CD4-positive, alpha-beta memory T cell (primary cell): ENCODE measurements at regions of chr5 and their contacts with region 1.

Region 1: GRCh38 chr5:172179361-172179989 is 8.5 kb downstream of the STK10 start:
- DNase-seq: peak in 4 of 5 donors; percentile 37 to 80 (median 44)
- H3K4me3 ChIP-seq: peak overlapping the region; percentile 44 to 55
- H3K4me3 Mint-ChIP-seq: peak overlapping the region; percentile 85 to 99 (median 94)
- H3K27ac ChIP-seq: peak overlapping the region; percentile 96
- H3K27ac Mint-ChIP-seq: peak overlapping the region; percentile 97 to 100 (median 99)
- H3K4me1 ChIP-seq: peaks cover 90% of the 10 kb centered on the region
- H3K4me1 Mint-ChIP-seq: peaks cover 51 to 97% (median 75%) of the 10 kb centered on the region in 4 donors
- H3K27me3 ChIP-seq: no peaks in the 10 kb centered on the region
- H3K27me3 Mint-ChIP-seq: no peaks in the 10 kb centered on the region

Region 2: DNA sequence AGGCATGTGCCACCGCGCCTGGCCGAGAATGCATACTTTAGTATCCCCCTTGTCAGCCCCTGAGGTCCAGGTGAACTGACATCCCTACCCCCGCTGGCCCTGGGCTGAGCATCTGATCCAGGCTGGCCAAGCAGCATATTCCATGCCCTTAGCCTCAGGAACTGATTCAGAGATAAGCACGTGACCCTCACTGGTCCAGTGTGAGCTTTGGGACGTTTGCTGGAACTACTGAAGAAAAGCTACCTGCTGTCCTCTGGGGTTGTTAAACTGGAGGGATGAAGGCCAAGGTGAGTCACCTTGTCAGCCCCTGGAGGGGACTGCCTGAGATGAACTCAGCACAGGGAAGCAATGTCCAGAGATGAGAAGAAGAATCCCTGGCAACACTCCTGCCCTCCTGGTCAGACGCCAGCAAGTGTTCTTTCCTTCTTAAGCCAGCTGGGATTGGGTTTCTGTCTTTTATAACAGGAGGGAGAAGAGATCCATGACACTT is 113.9 kb before region 1 on chr5:
- CTCF ChIA-PET with region 1: interaction called, 4 read pairs
- POLR2A ChIA-PET with region 1: interaction called, 52 read pairs
- intact Hi-C with region 1: no loop called
- DNase-seq: no peak
- H3K4me3 ChIP-seq: no peak overlapping the region
- H3K4me3 Mint-ChIP-seq: peak overlapping the region in 5 of 8 donors; percentile 4 to 86 (median 80)
- H3K27ac ChIP-seq: peak overlapping the region; percentile 62
- H3K27ac Mint-ChIP-seq: peak overlapping the region in 5 of 7 donors; percentile 29 to 98 (median 95)
- H3K4me1 ChIP-seq: peaks cover 68% of the 10 kb centered on the region
- H3K4me1 Mint-ChIP-seq: peaks cover 46 to 79% (median 60%) of the 10 kb centered on the region in 4 donors
- H3K27me3 ChIP-seq: no peaks in the 10 kb centered on the region
- H3K27me3 Mint-ChIP-seq: no peaks in the 10 kb centered on the region

Region 3: DNA sequence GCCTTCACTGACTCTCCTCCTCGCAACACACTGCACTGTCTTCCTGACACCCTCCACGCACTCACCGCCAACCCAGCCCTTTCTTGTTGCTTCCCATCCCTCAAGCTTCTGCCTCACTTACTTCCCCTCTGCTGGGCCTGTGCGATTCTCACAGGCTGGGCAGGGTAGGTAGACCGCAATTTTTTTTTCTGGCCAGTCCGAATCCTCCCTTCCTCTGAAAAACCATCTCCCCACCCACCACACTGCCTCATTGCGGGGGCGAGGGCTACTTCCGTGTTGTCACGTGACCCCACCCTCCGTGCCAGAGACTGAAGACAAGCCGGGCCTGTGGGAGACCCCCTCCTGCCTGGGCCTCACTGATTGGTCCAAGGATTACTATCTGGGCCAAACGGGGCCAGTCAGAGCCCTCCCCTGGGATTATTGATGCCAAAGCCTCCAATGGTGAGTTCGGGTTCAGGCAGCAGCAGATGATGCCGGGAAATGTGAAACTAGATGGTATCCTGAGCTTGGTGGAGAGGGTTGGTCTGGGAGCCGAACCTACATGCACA is 64.5 kb before region 1 on chr5:
- CTCF ChIA-PET with region 1: interaction called, 248 read pairs
- POLR2A ChIA-PET with region 1: interaction called, 597 read pairs
- intact Hi-C with region 1: loop called (anchors 1 kb)
- DNase-seq: peak; percentile 56 to 83 (median 59)
- H3K4me3 ChIP-seq: peak overlapping the region in 1 of 2 donors; percentile 17
- H3K4me3 Mint-ChIP-seq: peak overlapping the region; percentile 69 to 92 (median 80)
- H3K27ac ChIP-seq: peak overlapping the region; percentile 74
- H3K27ac Mint-ChIP-seq: peak overlapping the region; percentile 94 to 100 (median 96)
- H3K4me1 ChIP-seq: peaks cover 93% of the 10 kb centered on the region
- H3K4me1 Mint-ChIP-seq: peaks cover 56 to 86% (median 72%) of the 10 kb centered on the region in 4 donors
- H3K27me3 ChIP-seq: no peaks in the 10 kb centered on the region
- H3K27me3 Mint-ChIP-seq: no peaks in the 10 kb centered on the region

Region 4: GRCh38 chr5:172142709-172143215 is 36.7 kb before region 1 on chr5:
- CTCF ChIA-PET with region 1: interaction called, 4 read pairs
- POLR2A ChIA-PET with region 1: interaction called, 11 read pairs
- intact Hi-C with region 1: no loop called
- DNase-seq: no peak
- H3K4me3 ChIP-seq: no peak overlapping the region
- H3K4me3 Mint-ChIP-seq: peak overlapping the region in 4 of 8 donors; percentile 15 to 61 (median 34)
- H3K27ac ChIP-seq: no peak overlapping the region
- H3K27ac Mint-ChIP-seq: peak overlapping the region; percentile 58 to 94 (median 72)
- H3K4me1 ChIP-seq: peaks cover 86% of the 10 kb centered on the region
- H3K4me1 Mint-ChIP-seq: peaks cover 66 to 87% (median 78%) of the 10 kb centered on the region in 4 donors
- H3K27me3 ChIP-seq: no peaks in the 10 kb centered on the region
- H3K27me3 Mint-ChIP-seq: no peaks in the 10 kb centered on the region

Region 5: DNA sequence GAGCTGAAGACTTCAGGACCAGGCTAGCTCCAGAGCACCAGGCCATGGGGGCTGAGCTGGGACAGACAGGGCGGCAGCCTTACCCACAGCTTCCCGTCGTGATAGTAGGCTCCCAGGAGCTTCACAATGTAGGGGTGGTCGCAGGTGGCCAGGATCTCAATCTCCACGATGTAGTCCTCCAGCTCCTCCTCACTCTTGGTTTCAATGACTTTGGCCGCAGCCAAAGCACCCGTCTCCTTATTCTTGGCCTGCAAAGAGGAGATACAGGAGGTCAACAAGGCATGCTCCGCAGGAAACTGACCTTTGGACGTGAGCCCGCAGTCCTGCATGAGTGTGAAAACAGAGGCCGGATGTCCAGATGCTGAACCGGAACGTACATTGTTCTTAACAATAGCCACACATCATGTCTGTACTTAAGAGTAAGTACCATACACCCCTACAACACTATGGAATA is 22.9 kb before region 1 on chr5:
- CTCF ChIA-PET with region 1: interaction called, 429 read pairs
- POLR2A ChIA-PET with region 1: interaction called, 89 read pairs
- intact Hi-C with region 1: loop called (anchors 1 kb)
- DNase-seq: no peak
- H3K4me3 ChIP-seq: no peak overlapping the region
- H3K4me3 Mint-ChIP-seq: peak overlapping the region in 2 of 8 donors; percentile 3 to 9
- H3K27ac ChIP-seq: no peak overlapping the region
- H3K27ac Mint-ChIP-seq: peak overlapping the region in 6 of 7 donors; percentile 35 to 88 (median 74)
- H3K4me1 ChIP-seq: peaks cover 75% of the 10 kb centered on the region
- H3K4me1 Mint-ChIP-seq: peaks cover 53 to 90% (median 69%) of the 10 kb centered on the region in 4 donors
- H3K27me3 ChIP-seq: no peaks in the 10 kb centered on the region
- H3K27me3 Mint-ChIP-seq: no peaks in the 10 kb centered on the region

Region 6: DNA sequence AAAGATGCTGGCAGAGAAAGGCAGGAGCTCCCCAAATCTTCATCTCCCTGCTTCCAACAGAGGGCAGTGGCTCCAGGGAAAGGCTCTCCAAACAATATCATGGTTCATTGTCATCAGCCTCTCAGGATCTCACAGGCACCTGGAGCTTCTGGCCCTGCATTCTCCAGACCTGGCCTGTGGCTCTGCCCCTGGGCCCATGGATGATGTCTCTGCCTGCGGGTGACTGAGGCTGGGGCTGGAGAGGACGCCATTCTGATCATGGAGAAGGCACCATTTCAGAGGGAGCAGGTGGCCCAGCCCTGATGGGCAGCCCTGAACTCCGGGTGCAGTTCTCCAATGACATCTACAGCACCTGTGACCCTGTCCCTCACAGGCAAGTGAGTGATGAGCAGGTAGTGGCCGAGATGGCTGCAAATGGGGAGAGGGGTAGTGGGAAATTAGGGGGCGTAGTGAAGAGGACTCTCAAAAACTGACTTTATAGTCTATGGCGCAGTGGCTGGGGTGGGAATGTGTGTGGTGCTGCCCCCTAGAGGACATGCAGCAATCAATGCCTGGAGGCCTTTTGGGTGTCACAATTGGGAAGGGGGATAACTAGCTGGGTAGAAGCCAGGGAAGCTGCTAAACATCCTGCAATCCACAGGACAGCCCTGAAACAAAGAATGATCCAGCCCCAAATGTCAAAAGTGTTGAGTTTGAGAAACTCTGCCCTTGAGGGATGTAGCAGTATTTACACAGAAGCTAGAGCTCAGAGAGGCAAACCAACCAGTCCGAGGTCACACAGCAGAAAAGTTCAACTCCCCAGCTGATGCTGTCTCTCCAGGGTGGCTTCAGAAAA is 271.6 kb after region 1 on chr5:
- CTCF ChIA-PET with region 1: no interaction called
- POLR2A ChIA-PET with region 1: no interaction called
- intact Hi-C with region 1: no loop called
- DNase-seq: peak in 4 of 5 donors; percentile 18 to 28 (median 22)
- H3K4me3 ChIP-seq: no peak overlapping the region
- H3K4me3 Mint-ChIP-seq: peak overlapping the region in 3 of 8 donors; percentile 13 to 59 (median 47)
- H3K27ac ChIP-seq: no peak overlapping the region
- H3K27ac Mint-ChIP-seq: no peak overlapping the region
- H3K4me1 ChIP-seq: peaks cover 11% of the 10 kb centered on the region
- H3K4me1 Mint-ChIP-seq: peaks cover 2 to 20% (median 12%) of the 10 kb centered on the region in 4 donors
- H3K27me3 ChIP-seq: peaks cover 5% of the 10 kb centered on the region
- H3K27me3 Mint-ChIP-seq: peaks cover 26 to 43% of the 10 kb centered on the region in 2 donors

Region 7: DNA sequence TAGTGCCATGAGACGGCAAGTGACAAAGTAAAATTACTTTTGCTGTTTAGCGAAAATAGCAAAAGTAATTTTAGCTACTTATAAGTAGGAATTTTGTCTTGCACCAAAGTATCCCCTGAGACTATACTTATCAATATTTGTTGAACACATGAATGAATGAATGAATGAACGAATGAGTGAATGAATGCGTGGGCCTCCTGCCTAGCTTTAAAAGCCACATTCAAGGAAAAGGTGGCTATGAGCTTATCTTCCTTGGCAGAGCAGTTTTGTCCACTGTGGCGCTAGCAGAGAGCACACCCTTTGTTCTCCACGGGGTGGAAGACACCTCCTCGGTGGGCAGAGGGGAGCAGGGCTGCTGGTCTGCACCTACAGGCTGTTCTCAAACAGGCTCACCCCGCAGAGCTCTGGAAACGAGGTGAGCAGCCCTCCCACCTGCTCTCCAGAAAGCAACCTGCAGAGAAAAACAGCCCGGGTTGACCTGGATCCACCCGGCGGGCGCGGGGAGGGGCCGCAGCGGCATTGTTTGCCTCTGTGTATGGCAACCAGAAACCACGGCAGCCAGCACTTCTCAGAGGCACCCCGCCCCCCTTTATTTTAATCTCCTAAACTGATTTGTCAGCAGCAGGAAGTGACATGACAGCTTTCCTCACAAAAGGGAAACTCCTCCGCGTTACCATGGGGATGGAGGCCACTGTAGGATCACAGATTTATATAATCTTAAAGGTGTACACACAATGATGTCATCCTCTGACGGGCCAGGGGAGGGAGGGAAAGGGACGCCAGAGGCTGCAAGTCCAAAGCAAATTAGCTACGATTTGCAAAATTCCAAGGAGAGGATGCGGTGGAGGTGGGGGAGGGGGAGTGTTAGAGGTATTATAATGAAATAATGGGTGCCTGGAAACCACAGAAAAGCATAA is 585.6 kb after region 1 on chr5:
- CTCF ChIA-PET with region 1: no interaction called
- POLR2A ChIA-PET with region 1: interaction called, 19 read pairs
- intact Hi-C with region 1: loop called (anchors 1 kb)
- DNase-seq: peak; percentile 98 to 100 (median 99)
- H3K4me3 ChIP-seq: peak overlapping the region in 1 of 2 donors; percentile 52
- H3K4me3 Mint-ChIP-seq: peak overlapping the region; percentile 77 to 90 (median 84)
- H3K27ac ChIP-seq: peak overlapping the region; percentile 100
- H3K27ac Mint-ChIP-seq: peak overlapping the region; percentile 95 to 100 (median 99)
- H3K4me1 ChIP-seq: peaks cover 55% of the 10 kb centered on the region
- H3K4me1 Mint-ChIP-seq: peaks cover 46 to 70% (median 58%) of the 10 kb centered on the region in 4 donors
- H3K27me3 ChIP-seq: no peaks in the 10 kb centered on the region
- H3K27me3 Mint-ChIP-seq: peaks cover 0 to 1% of the 10 kb centered on the region in 2 donors

Region 8: DNA sequence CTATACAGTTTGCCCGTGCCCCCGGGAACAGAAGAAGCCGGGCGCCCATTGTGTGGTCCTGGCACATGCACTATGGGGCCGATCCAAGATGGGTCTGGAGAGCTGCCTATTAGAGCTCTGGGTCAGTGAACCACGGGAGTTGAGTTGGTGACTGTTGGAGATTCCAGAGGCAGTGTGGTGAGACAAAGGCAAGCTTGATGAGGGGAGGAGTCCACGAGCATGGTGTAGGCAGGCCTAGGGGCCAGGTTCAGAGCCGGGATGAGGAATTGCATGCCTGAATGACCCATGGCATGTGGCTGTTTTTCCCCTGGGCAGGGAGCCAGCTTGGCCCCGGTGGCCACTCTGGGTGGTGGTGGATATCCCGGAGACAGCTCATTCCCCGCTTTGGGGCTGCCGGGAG is 1233.1 kb after region 1 on chr5:
- CTCF ChIA-PET with region 1: no interaction called
- POLR2A ChIA-PET with region 1: no interaction called
- intact Hi-C with region 1: no loop called
- DNase-seq: no peak
- H3K4me3 ChIP-seq: no peak overlapping the region
- H3K4me3 Mint-ChIP-seq: no peak overlapping the region
- H3K27ac ChIP-seq: no peak overlapping the region
- H3K27ac Mint-ChIP-seq: no peak overlapping the region
- H3K4me1 ChIP-seq: no peaks in the 10 kb centered on the region
- H3K4me1 Mint-ChIP-seq: no peaks in the 10 kb centered on the region
- H3K27me3 ChIP-seq: no peaks in the 10 kb centered on the region
- H3K27me3 Mint-ChIP-seq: peaks cover 6 to 12% of the 10 kb centered on the region in 2 donors